Activated naive CD8-positive, alpha-beta T cell treated with anti-CD3 and anti-CD28 coated beads, Interleukin-2, amount 10 ng/mL, durations not matched to agents 7 days and 5 days (primary cell): ENCODE measurements at regions of chr3 and their contacts with region 1.

Region 1: GRCh38 chr3:69065318-69065964 is 13.3 kb upstream of the TMF1 start:
- DNase-seq: no peak
- ATAC-seq: peak; percentile 77
- H3K4me3 Mint-ChIP-seq: peak overlapping the region; percentile 60
- H3K27ac Mint-ChIP-seq: peak overlapping the region; percentile 63
- H3K4me1 Mint-ChIP-seq: peaks cover 31% of the 10 kb centered on the region
- H3K27me3 Mint-ChIP-seq: no peaks in the 10 kb centered on the region

Region 2: DNA sequence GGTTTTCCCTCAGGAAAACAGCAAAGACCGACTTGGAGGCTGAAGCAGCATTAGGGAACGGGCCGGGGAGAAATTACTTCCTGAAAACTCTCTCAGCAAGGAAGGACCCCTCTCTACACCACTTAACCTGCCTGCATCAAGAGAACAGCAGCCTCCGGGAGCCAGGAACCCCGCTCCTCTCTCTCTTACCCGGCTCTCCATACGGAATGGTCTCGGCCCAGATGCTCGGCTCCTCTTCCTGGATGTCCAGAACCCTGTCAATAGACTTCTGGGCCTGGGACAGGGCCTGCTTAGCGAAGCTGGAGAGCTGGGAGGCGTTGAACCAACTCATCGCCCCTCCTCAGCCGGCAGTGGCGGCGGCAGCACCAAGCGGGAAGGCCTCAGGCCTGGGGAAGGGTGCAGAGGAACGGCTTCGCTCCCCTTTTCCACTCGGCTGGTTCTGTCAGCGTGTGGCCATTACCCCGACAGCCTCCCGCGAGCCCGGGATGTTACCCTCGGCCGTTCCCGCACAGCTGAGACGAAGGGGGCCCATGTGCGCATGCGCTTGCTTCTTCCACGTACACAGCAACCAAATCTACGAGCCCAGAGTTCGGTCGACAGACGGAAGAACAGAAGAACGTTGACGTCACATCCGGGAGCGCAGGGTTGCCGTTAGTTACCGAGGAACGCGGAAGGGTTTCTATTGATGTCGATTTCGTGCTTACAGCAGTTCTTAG is 13.5 kb before region 1 on chr3 and contains the start of gene TMF1:
- POLR2A ChIA-PET with region 1: interaction called, 38 read pairs
- DNase-seq: peak; percentile 95
- ATAC-seq: peak; percentile 95
- H3K4me3 Mint-ChIP-seq: peak within 1 kb of the TSS; percentile 98
- H3K27ac Mint-ChIP-seq: peak within 1 kb of the TSS; percentile 97
- H3K4me1 Mint-ChIP-seq: peaks cover 39% of the 10 kb centered on the region
- H3K27me3 Mint-ChIP-seq: no peaks in the 10 kb centered on the region
- total RNA-seq, gene TMF1: 53.5 to 55.2 TPM

Region 3: GRCh38 chr3:69092030-69092516 is 26.6 kb after region 1 on chr3:
- POLR2A ChIA-PET with region 1: interaction called, 44 read pairs
- DNase-seq: no peak
- ATAC-seq: peak; percentile 82
- H3K4me3 Mint-ChIP-seq: peak overlapping the region; percentile 93
- H3K27ac Mint-ChIP-seq: peak overlapping the region; percentile 84
- H3K4me1 Mint-ChIP-seq: peaks cover 71% of the 10 kb centered on the region
- H3K27me3 Mint-ChIP-seq: no peaks in the 10 kb centered on the region

Region 4: GRCh38 chr3:69271098-69271497 is 205.7 kb after region 1 on chr3:
- POLR2A ChIA-PET with region 1: no interaction called
- DNase-seq: no peak
- ATAC-seq: no peak
- H3K4me3 Mint-ChIP-seq: no peak overlapping the region
- H3K27ac Mint-ChIP-seq: no peak overlapping the region
- H3K4me1 Mint-ChIP-seq: peaks cover under 1% of the 10 kb centered on the region
- H3K27me3 Mint-ChIP-seq: peaks cover 2% of the 10 kb centered on the region